ENCODE measurements at regions of chr6 and their contacts with region 1.

Region 1: DNA sequence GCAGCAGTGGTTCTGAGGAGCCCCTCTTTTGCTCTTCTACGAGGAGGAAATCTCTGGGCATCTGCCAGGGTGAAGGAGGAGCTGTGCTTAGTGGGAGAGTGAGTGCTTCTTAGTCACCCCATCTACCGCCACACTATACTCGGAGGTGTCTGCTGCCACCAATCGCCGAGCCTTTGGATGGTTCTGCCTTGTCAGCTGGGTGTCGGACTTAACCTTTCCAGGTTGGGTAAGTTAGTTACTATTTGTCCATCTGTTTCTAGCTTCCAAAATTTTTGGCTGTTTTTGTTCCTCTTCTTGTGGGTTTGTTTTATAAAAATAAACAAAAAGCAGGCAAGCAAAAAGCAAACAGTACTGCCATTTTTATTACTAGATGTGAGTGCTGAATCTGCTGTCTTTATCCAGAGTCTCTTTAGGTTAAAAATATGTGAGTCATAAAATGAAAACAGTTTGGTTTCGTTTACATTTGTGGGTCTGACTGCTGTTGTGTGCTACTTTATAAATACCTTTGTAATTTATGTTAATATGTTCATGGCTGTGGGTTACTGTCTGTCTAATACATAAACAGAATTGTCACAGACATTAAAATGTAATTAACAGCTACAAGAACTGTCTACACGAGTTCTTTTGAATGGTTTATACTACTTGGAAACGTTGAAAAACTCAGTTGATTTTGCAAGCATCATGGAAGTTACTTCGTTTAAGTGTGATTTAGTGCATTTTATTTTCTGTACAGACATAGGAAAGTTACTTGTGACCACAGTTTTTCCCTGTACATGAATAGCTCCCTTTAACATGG is 89.2 kb downstream of the ARID1B start:
- DNase-seq: no peak
- H3K4me3 ChIP-seq: no peak overlapping the region
- H3K27me3 ChIP-seq: no peaks in the 10 kb centered on the region
- CTCF ChIP-seq: 0 out of 2 replicates have a peak, but pooled peaks have one; percentile 3

Region 2: DNA sequence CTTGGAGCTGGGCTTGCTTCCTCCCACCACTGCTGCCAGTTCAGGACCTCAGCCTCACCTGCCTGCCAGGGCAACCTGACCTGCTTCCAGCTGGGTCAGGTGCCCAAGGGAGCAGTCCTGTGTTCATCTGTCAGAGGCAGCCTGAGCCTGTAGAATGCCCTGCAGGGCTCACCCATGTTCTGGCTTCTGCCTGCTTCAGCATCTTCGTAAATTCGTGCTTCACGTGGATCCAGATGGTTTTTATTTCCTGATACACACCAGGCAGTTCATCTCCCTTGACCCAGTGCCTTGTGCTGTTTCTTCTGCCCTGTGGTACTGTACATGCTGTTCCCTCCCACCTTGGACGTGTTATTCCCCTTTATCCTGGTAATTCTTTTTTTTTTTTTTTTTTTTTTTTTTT is 39.0 kb before region 1 on chr6:
- CTCF ChIA-PET with region 1: no interaction called
- POLR2A ChIA-PET with region 1: no interaction called
- DNase-seq: no peak
- H3K4me3 ChIP-seq: no peak overlapping the region
- H3K27me3 ChIP-seq: no peaks in the 10 kb centered on the region
- CTCF ChIP-seq: no peak

Region 3: GRCh38 chr6:156943166-156943565 is 76.7 kb after region 1 on chr6:
- CTCF ChIA-PET with region 1: no interaction called
- POLR2A ChIA-PET with region 1: interaction called, 11 read pairs
- DNase-seq: no peak
- H3K4me3 ChIP-seq: no peak overlapping the region
- H3K27me3 ChIP-seq: no peaks in the 10 kb centered on the region
- CTCF ChIP-seq: no peak

Region 4: GRCh38 chr6:157054531-157054979 is 188.1 kb after region 1 on chr6:
- CTCF ChIA-PET with region 1: no interaction called
- POLR2A ChIA-PET with region 1: no interaction called
- DNase-seq: no peak
- H3K4me3 ChIP-seq: no peak overlapping the region
- H3K27me3 ChIP-seq: no peaks in the 10 kb centered on the region
- CTCF ChIP-seq: no peak